Activated T-helper 1 cell treated with anti-CD3 and anti-CD28 coated beads, Interleukin-12 subunit alpha, Interleukin-12 subunit beta, Interleukin-2, Interleukin-4 antibody, amounts not matched to agents 30 ng/mL and 10 ng/mL and 1 ng/mL, durations not matched to agents 14 hours and 24 hours and 36 hours (primary cell): ENCODE measurements at regions of chr12 and their contacts with region 1.

Region 1: GRCh38 chr12:54359033-54359761 is 5.1 kb downstream of the GPR84 start:
- DNase-seq: peak; percentile 93
- H3K4me3 Mint-ChIP-seq: no peak overlapping the region
- H3K27ac Mint-ChIP-seq: no peak overlapping the region
- H3K4me1 Mint-ChIP-seq: peaks cover 21% of the 10 kb centered on the region
- H3K27me3 Mint-ChIP-seq: peaks cover 2% of the 10 kb centered on the region

Region 2: GRCh38 chr12:54147186-54147585 is 212.0 kb before region 1 on chr12:
- intact Hi-C with region 1: no loop called
- DNase-seq: no peak
- H3K4me3 Mint-ChIP-seq: no peak overlapping the region
- H3K27ac Mint-ChIP-seq: no peak overlapping the region
- H3K4me1 Mint-ChIP-seq: no peaks in the 10 kb centered on the region
- H3K27me3 Mint-ChIP-seq: peaks cover 29% of the 10 kb centered on the region

Region 3: GRCh38 chr12:54214553-54215406 is 144.4 kb before region 1 on chr12:
- intact Hi-C with region 1: loop called (anchors 1 kb)
- DNase-seq: peak; percentile 86
- H3K4me3 Mint-ChIP-seq: peak overlapping the region; percentile 72
- H3K27ac Mint-ChIP-seq: no peak overlapping the region
- H3K4me1 Mint-ChIP-seq: peaks cover 19% of the 10 kb centered on the region
- H3K27me3 Mint-ChIP-seq: peaks cover 13% of the 10 kb centered on the region

Region 4: GRCh38 chr12:54294152-54294952 is 64.8 kb before region 1 on chr12:
- intact Hi-C with region 1: loop called (anchors 1 kb)
- DNase-seq: peak; percentile 46
- H3K4me3 Mint-ChIP-seq: no peak overlapping the region
- H3K27ac Mint-ChIP-seq: no peak overlapping the region
- H3K4me1 Mint-ChIP-seq: peaks cover 4% of the 10 kb centered on the region
- H3K27me3 Mint-ChIP-seq: peaks cover 16% of the 10 kb centered on the region

Region 5: GRCh38 chr12:54337280-54337842 is 21.8 kb before region 1 on chr12:
- intact Hi-C with region 1: loop called (anchors 1 kb)
- DNase-seq: no peak
- H3K4me3 Mint-ChIP-seq: no peak overlapping the region
- H3K27ac Mint-ChIP-seq: no peak overlapping the region
- H3K4me1 Mint-ChIP-seq: peaks cover 21% of the 10 kb centered on the region
- H3K27me3 Mint-ChIP-seq: no peaks in the 10 kb centered on the region

Region 6: DNA sequence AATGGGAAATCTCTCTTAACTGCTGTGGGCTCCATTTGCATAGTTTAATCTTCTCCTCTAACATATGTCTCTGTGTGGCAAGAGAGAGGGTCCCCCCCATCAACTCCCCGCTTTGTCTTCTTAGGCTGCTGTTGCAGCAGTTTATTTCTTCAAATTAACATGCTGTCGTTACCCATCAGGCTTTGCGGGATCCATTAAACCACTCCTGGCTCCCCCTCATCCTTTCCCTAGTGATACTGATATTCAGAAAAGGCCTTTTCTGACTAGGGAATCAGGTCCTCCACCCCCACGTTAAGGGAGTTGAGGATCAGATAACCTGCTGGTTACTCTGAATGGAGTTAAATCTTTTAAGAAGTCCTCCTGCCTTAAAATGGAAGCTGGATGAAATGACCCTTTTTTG is 10.2 kb before region 1 on chr12:
- intact Hi-C with region 1: no loop called
- DNase-seq: no peak
- H3K4me3 Mint-ChIP-seq: no peak overlapping the region
- H3K27ac Mint-ChIP-seq: no peak overlapping the region
- H3K4me1 Mint-ChIP-seq: peaks cover 19% of the 10 kb centered on the region
- H3K27me3 Mint-ChIP-seq: no peaks in the 10 kb centered on the region

Region 7: GRCh38 chr12:54411391-54412241 is 52.4 kb after region 1 on chr12:
- intact Hi-C with region 1: loop called (anchors 2 kb)
- DNase-seq: peak; percentile 44
- H3K4me3 Mint-ChIP-seq: peak overlapping the region; percentile 50
- H3K27ac Mint-ChIP-seq: peak overlapping the region; percentile 87
- H3K4me1 Mint-ChIP-seq: peaks cover 51% of the 10 kb centered on the region
- H3K27me3 Mint-ChIP-seq: no peaks in the 10 kb centered on the region